Natural killer cell (primary cell): ENCODE measurements at regions of chr18 and their contacts with region 1.

Region 1: DNA sequence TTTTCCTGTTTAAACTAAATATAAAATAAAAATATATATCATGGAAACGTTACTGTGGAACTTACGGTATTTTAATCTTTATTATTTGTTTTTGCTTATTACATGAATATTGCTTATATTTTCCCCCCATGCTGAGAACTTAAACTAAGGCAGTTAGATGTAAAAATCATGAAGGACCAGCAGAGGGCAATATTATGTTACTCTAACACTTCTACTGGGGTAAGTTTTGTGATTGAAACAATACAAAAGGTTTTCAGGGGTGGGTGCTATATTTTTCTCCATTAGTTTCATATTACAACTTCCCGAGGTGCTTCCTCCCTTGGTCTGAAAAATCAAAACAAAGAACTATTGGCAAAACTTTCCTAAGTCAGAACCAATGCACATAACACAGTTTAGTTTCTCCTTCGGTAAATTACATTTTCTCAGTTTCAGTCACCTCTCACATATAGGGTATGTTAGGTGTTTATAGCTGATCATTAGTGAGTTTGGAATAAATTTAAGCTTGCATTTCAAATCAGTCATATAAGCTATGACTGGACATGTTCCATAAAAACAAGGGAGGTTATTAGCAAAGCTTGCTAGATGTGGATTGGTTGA is 54.8 kb downstream of the ZNF407 start:
- DNase-seq: peak in 1 of 2 donors; percentile 64
- ATAC-seq: peak in 2 of 3 donors; percentile 38 to 56
- H3K4me3 ChIP-seq: no peak overlapping the region
- H3K4me3 Mint-ChIP-seq: no peak overlapping the region
- H3K27ac ChIP-seq: no peak overlapping the region
- H3K27ac Mint-ChIP-seq: no peak overlapping the region
- H3K4me1 ChIP-seq: no peaks in the 10 kb centered on the region
- H3K4me1 Mint-ChIP-seq: no peaks in the 10 kb centered on the region
- H3K27me3 ChIP-seq: no peaks in the 10 kb centered on the region
- H3K27me3 Mint-ChIP-seq: no peaks in the 10 kb centered on the region
- CTCF ChIP-seq: peak; percentile 58

Region 2: GRCh38 chr18:74892066-74892627 is 239.7 kb after region 1 on chr18:
- intact Hi-C with region 1: no loop called
- DNase-seq: no peak
- ATAC-seq: no peak
- H3K4me3 ChIP-seq: no peak overlapping the region
- H3K4me3 Mint-ChIP-seq: no peak overlapping the region
- H3K27ac ChIP-seq: no peak overlapping the region
- H3K27ac Mint-ChIP-seq: no peak overlapping the region
- H3K4me1 ChIP-seq: no peaks in the 10 kb centered on the region
- H3K4me1 Mint-ChIP-seq: no peaks in the 10 kb centered on the region
- H3K27me3 ChIP-seq: no peaks in the 10 kb centered on the region
- H3K27me3 Mint-ChIP-seq: no peaks in the 10 kb centered on the region
- CTCF ChIP-seq: no peak

Region 3: GRCh38 chr18:75364512-75365253 is 712.2 kb after region 1 on chr18:
- intact Hi-C with region 1: loop called (anchors 5 kb)
- DNase-seq: peak in 1 of 2 donors; percentile 6
- ATAC-seq: no peak
- H3K4me3 ChIP-seq: no peak overlapping the region
- H3K4me3 Mint-ChIP-seq: no peak overlapping the region
- H3K27ac ChIP-seq: no peak overlapping the region
- H3K27ac Mint-ChIP-seq: no peak overlapping the region
- H3K4me1 ChIP-seq: no peaks in the 10 kb centered on the region
- H3K4me1 Mint-ChIP-seq: no peaks in the 10 kb centered on the region
- H3K27me3 ChIP-seq: no peaks in the 10 kb centered on the region
- H3K27me3 Mint-ChIP-seq: peaks cover 2 to 9% of the 10 kb centered on the region in 2 donors
- CTCF ChIP-seq: no peak

Region 4: DNA sequence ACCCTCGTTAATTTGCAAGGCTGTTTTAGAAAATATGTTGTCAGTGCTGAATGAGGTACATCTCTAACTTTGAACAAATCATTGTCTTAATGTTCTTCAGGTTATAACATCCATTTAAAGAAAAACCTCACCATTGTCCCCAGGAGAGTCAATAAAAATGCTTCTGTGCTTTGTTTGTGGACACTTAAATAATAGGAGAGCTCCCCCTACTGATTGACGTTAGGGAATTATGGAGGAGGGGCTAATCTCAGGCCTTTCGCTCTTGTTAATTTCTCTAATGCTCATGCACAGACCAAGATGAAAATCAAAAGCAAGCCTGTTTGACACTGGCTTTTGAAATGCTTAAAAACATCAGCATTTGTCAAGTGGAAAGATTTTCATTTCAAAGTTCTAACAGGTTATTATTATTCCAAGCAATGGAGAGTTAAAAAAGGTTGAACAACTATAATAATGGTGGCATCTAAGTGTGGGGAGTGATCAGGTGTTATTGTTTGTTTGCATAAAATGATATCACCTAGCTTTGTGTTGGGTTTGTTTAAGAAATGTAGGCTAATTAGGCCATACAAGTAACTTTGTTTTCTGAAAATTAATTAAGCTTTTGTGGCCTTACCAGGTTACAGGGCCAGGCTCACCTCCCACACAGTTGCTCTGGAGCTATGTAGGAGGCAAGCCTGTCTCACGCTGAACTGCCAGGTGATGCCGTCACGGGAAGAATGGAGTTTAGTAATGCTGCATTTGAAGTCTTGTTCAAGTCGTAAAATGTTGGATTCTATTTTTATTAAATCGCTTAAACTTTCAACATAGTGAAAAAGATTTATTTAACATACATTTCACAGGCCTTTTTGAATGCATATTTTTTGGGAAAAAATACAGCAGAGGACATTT is 826.7 kb after region 1 on chr18:
- intact Hi-C with region 1: loop called (anchors 2 kb)
- DNase-seq: peak in 1 of 2 donors; percentile 71
- ATAC-seq: peak in 1 of 3 donors; percentile 65
- H3K4me3 ChIP-seq: no peak overlapping the region
- H3K4me3 Mint-ChIP-seq: no peak overlapping the region
- H3K27ac ChIP-seq: no peak overlapping the region
- H3K27ac Mint-ChIP-seq: no peak overlapping the region
- H3K4me1 ChIP-seq: no peaks in the 10 kb centered on the region
- H3K4me1 Mint-ChIP-seq: no peaks in the 10 kb centered on the region
- H3K27me3 ChIP-seq: peaks cover 4% of the 10 kb centered on the region
- H3K27me3 Mint-ChIP-seq: peaks cover 9 to 54% of the 10 kb centered on the region in 2 donors
- CTCF ChIP-seq: peak; percentile 65

Region 5: GRCh38 chr18:76349067-76349715 is 1696.7 kb after region 1 on chr18:
- intact Hi-C with region 1: loop called (anchors 5 kb)
- DNase-seq: peak; percentile 47 to 76
- ATAC-seq: peak; percentile 47 to 73 (median 64)
- H3K4me3 ChIP-seq: no peak overlapping the region
- H3K4me3 Mint-ChIP-seq: no peak overlapping the region
- H3K27ac ChIP-seq: no peak overlapping the region
- H3K27ac Mint-ChIP-seq: no peak overlapping the region
- H3K4me1 ChIP-seq: peaks cover 4% of the 10 kb centered on the region
- H3K4me1 Mint-ChIP-seq: peaks cover 8 to 9% of the 10 kb centered on the region in 2 donors
- H3K27me3 ChIP-seq: no peaks in the 10 kb centered on the region
- H3K27me3 Mint-ChIP-seq: peaks cover 3 to 8% of the 10 kb centered on the region in 2 donors
- CTCF ChIP-seq: peak; percentile 86